GM10248 (cell line): ENCODE measurements at regions of chr5 and their contacts with region 1.

Region 1: GRCh38 chr5:59367791-59368394 is 525.6 kb downstream of the PDE4D start:
- DNase-seq: peak; percentile 16
- CTCF ChIP-seq: peak; percentile 79

Region 2: DNA sequence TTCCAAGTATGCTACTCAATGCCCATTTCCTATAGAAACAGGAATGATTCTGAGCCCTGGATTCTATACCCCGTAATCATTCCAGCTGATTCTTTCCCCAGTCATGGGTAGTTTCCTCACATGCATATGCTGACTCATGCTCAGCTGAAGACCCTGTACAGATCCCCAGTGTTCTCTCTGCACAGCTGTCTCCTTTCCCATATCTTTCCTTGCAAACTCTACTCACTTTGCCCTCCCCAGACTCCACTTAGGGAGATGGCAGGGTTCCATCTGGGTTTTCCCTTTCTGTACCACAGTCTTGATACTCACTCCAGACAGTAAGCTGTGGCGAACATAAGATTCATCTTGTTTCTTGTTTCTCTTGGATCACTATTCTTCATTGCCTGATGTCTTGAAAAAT is 427.4 kb before region 1 on chr5:
- CTCF ChIA-PET with region 1: no interaction called
- POLR2A ChIA-PET with region 1: no interaction called
- DNase-seq: no peak
- CTCF ChIP-seq: no peak

Region 3: DNA sequence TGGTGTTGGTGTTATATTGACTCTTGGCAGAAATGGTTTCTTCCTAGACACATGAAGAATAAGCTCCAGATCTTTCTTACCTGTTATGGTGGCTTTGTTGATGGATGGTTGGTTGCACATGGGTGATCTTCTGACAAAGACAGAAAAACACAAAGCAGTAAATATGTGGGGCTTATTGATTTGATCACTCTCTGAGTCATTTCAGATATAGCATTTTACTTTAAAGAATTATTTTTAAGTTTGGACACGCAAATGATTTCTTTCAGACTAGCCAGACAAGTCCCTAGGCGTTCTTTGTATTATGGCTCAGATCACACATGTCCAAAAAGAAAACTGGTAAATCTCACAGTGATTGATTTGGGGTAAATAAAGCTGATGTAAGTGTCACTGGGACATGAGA is 187.4 kb before region 1 on chr5:
- CTCF ChIA-PET with region 1: interaction called, 135 read pairs
- POLR2A ChIA-PET with region 1: no interaction called
- DNase-seq: peak; percentile 22
- CTCF ChIP-seq: no peak

Region 4: GRCh38 chr5:59351076-59351794 is 16.7 kb before region 1 on chr5:
- CTCF ChIA-PET with region 1: interaction called, 15 read pairs
- POLR2A ChIA-PET with region 1: no interaction called
- DNase-seq: no peak
- CTCF ChIP-seq: no peak

Region 5: GRCh38 chr5:59380350-59380951 is 12.6 kb after region 1 on chr5:
- CTCF ChIA-PET with region 1: interaction called, 20 read pairs
- POLR2A ChIA-PET with region 1: no interaction called
- DNase-seq: peak; percentile 45
- CTCF ChIP-seq: peak; percentile 47

Region 6: DNA sequence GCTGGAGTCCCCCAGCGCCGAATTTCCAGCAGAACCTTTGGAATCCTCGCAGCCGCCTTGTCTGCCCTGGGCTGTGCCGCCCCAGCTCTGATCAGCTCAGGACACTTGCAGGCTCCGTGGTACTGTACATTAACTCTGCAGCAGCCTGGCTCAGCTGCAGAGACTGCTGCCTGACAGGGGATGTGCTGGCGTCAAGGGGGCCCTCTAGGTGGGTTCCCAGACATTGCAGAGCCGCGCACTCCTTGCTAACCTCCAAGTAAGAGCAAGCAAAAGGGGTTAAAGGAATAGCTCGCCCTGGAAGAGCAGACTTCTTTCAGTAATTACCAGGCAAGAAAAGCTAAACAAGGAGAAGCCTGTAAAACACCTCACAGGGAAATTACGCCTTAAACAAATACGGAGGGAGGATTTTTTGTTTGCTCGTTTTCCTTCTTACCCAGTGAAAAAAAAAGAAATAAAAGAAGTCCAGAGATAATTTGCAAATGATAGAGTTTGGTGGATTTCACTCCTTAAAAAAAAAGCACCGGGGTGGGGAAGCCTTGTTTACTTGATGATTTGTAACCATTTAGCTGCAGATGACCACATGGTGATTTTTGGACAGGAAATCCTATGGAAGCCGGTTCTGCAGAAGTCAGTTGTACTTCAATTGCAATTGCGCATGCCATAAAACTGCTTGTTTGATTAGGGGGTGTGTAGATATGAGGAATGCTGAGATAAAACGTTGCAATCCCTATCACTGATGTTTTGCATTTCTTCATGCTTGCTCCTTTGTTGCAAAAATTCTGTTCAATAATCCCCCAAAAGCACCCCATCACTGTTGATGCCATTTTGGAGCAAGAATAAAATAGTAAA is 219.8 kb after region 1 on chr5:
- CTCF ChIA-PET with region 1: no interaction called
- POLR2A ChIA-PET with region 1: no interaction called
- DNase-seq: no peak
- CTCF ChIP-seq: no peak